Heart right ventricle (tissue), 16 donors: ENCODE measurements at regions of chr14 and their contacts with region 1.

Region 1: DNA sequence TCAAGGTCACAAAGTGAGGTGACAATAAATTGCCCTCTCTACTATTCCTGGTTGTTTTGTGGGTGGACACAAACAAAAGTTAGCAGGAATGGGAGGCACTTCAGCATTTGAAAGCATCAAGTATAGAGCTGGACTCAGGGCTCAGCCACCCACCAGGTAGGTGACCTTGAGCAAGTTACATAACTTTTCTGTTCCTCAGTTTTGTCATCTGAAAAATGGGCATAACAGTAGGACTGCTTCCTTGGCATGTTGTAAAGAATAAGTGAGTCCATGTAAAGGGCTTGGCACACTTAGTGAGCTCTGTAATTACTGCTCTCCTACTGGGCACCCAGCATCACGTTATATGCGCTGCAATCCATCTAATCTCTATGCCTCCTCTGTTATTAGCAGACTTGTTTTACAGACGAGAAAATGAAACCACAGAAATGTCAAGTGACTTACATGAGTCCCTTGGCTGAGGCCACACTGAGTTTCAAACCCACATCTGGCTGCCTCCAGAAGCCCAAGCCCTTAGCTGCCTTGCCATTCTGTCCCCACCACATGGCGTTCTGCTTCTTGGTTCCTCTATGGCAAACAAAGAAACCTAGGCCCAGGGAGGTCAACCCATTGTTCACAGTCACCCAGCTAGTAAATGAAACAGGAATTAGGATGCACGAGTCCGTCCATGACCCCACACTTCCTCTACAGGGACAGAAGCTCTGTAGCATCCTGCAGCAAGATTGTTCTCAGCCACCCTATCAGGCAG is 63.2 kb upstream of the SLC24A4 start:
- DNase-seq: no peak
- ATAC-seq: no peak
- H3K4me3 ChIP-seq: no peak overlapping the region
- H3K27ac ChIP-seq: peak overlapping the region in 1 of 10 donors; percentile 23
- H3K4me1 ChIP-seq: peaks cover 0 to 33% (median 0%) of the 10 kb centered on the region in 9 donors
- H3K27me3 ChIP-seq: peaks cover 0 to 36% (median 26%) of the 10 kb centered on the region in 7 donors
- CTCF ChIP-seq: no peak

Region 2: DNA sequence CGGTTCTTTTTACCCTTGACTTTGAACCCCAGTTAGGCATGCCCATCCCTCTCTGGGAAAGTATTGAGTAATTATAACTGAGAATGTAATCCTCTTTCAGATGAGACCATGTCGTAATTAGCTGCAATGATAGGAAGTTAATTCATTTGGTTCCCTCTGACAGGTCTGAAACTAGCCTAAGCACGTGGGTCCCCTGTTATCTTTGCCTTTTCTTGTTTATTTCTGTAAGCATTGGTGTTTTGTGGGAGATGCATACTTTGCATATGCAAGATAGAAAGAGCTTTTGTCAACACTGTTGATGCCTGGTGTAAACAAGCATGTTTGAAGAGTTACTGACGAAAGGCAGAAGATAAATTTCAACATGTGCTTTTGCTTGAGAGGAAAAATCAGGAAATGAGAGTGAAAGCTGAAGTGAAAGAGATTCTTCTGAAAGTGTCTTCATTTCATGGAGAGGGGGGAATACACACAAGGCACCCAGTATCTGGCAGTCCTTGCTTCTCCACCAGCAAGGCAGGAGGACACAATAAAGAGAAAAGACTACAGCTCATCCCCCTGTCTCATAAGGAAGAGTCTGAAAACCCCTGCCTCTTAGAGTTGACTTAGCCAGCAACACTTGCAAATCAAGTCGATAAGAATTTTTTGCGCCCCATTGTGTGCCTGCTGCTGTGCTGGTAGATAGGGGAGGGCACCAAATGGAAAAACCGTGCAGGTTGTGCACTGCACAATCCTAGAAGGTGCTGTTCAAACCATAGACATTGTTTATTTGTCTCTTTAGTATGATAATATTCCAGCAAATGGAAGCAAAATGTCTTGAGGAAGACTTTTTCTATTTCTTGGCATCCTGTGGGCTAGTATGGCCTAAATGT is 141.0 kb after region 1 on chr14:
- intact Hi-C with region 1: no loop called
- DNase-seq: no peak
- ATAC-seq: peak in 2 of 8 donors; percentile 39 to 55
- H3K4me3 ChIP-seq: no peak overlapping the region
- H3K27ac ChIP-seq: peak overlapping the region in 2 of 10 donors; percentile 6 to 76
- H3K4me1 ChIP-seq: peaks cover 0 to 58% (median 0%) of the 10 kb centered on the region in 9 donors
- H3K27me3 ChIP-seq: peaks cover 0 to 3% (median 0%) of the 10 kb centered on the region in 7 donors
- CTCF ChIP-seq: no peak

Region 3: GRCh38 chr14:92659765-92660561 is 400.2 kb after region 1 on chr14:
- intact Hi-C with region 1: loop called in 1 of 10 experiments (anchors 5 kb)
- DNase-seq: peak in 1 of 2 donors; percentile 55
- ATAC-seq: peak; percentile 20 to 75 (median 62)
- H3K4me3 ChIP-seq: peak overlapping the region in 1 of 10 donors; percentile 2
- H3K27ac ChIP-seq: peak overlapping the region; percentile 1 to 95 (median 60)
- H3K4me1 ChIP-seq: peaks cover 0 to 64% (median 28%) of the 10 kb centered on the region in 9 donors
- H3K27me3 ChIP-seq: no peaks in the 10 kb centered on the region
- CTCF ChIP-seq: no peak